Mammary epithelial cell (primary cell): ENCODE measurements at regions of chrX and their contacts with region 1.

Region 1: DNA sequence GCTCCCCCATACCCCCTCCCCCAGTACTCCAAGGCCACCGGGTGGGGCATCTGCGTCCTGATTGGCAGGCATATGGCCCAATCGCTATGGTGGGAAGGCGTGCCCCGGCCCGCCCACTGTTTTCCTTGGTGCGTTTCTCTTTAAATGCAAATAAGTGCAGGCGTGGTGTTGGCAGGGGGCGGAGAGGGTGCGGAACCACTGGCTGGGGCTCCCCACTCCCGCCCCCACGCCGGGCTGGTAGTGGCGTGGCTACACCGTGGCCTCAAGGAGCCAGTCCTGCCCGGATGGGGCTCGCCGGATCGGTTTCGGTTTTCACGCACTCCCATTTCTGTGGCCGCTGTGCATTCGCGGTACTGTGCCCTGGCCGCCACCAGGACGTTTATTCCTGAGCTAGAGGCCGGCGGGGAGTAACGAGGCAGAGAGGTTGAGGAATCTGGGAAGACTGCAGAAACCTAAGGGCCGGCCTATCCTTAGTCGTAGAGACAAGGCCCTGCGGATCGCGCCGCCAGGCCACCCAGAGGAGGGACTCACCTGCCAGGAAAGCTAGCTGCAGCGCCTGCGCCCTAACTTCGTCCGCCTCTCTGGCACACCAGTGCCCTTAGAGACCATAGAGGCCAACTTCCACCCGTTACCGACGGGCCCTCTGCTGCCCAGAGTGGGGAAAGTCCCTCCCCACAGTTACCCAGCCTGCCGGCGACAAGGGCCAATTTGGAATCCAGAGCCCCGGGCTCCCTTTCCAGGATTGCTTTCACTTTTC is 405 bp upstream of the AMER1 start:
- DNase-seq: peak; percentile 88
- H3K4me3 ChIP-seq: peak overlapping the region; percentile 54 to 69 (median 66)
- H3K27ac ChIP-seq: peak overlapping the region; percentile 68
- H3K4me1 ChIP-seq: peaks cover 11% of the 10 kb centered on the region
- H3K27me3 ChIP-seq: no peaks in the 10 kb centered on the region
- CTCF ChIP-seq: peak in 1 of 2 donors; percentile 21

Region 2: DNA sequence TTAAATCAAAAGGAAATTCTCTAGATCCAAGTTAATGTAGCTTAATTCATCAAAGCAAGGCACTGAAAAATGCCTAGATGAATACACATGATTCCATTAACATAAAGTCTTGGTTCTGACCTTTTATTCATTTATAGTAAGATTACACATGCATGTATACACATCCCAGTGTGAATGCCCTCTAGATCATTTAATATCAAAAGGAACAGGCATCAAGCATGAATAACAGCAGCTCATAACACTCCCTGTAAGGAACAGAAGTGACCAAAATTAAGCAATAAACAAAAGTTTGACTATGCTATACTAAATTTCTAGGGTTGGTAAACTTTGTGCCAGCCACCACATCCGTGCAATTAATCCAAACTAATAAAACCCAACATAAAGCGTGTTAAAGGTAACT is 1366.3 kb before region 1 on chrX:
- CTCF ChIA-PET with region 1: no interaction called
- dilution Hi-C with region 1: no loop called
- in situ Hi-C with region 1: no loop called
- intact Hi-C with region 1: no loop called
- DNase-seq: no peak
- H3K4me3 ChIP-seq: no peak overlapping the region
- H3K27ac ChIP-seq: no peak overlapping the region
- H3K4me1 ChIP-seq: no peaks in the 10 kb centered on the region
- H3K27me3 ChIP-seq: no peaks in the 10 kb centered on the region
- CTCF ChIP-seq: no peak

Region 3: GRCh38 chrX:63754860-63755582 is 450.9 kb before region 1 on chrX:
- CTCF ChIA-PET with region 1: no interaction called
- dilution Hi-C with region 1: no loop called
- in situ Hi-C with region 1: no loop called
- intact Hi-C with region 1: loop called (anchors 2 kb)
- DNase-seq: peak; percentile 89
- H3K4me3 ChIP-seq: peak overlapping the region; percentile 66 to 81 (median 78)
- H3K27ac ChIP-seq: peak overlapping the region; percentile 90
- H3K4me1 ChIP-seq: peaks cover 16% of the 10 kb centered on the region
- H3K27me3 ChIP-seq: no peaks in the 10 kb centered on the region
- CTCF ChIP-seq: no peak

Region 4: DNA sequence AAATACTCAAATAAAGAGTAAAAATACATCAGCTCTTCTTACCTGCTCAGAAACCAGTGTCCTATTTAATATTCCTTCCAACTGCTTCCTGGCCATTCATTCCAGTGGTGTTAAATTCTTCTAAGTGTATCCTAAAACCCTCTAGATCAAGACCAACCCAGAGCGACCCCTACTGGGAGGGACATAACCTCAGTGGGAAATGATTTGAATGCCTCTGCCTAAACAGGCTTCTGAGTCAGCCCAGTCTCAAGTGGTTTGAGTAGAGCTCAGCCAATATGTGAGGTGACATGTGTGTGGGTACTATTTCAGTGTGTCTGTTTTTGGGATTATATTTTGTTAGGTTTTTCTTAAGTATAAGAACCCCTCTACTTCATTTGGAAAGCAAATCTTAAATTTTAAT is 287.3 kb before region 1 on chrX:
- CTCF ChIA-PET with region 1: no interaction called
- dilution Hi-C with region 1: no loop called
- in situ Hi-C with region 1: no loop called
- intact Hi-C with region 1: loop called (anchors 10 kb)
- DNase-seq: peak; percentile 28
- H3K4me3 ChIP-seq: no peak overlapping the region
- H3K27ac ChIP-seq: no peak overlapping the region
- H3K4me1 ChIP-seq: peaks cover 7% of the 10 kb centered on the region
- H3K27me3 ChIP-seq: no peaks in the 10 kb centered on the region
- CTCF ChIP-seq: peak; percentile 24 to 50

Region 5: GRCh38 chrX:64093761-64094160 is 112.2 kb before region 1 on chrX:
- CTCF ChIA-PET with region 1: no interaction called
- dilution Hi-C with region 1: no loop called
- in situ Hi-C with region 1: no loop called
- intact Hi-C with region 1: loop called (anchors 2 kb)
- DNase-seq: no peak
- H3K4me3 ChIP-seq: no peak overlapping the region
- H3K27ac ChIP-seq: no peak overlapping the region
- H3K4me1 ChIP-seq: no peaks in the 10 kb centered on the region
- H3K27me3 ChIP-seq: no peaks in the 10 kb centered on the region
- CTCF ChIP-seq: peak; percentile 25 to 43

Region 6: GRCh38 chrX:64152857-64153256 is 53.1 kb before region 1 on chrX:
- CTCF ChIA-PET with region 1: no interaction called
- dilution Hi-C with region 1: no loop called
- in situ Hi-C with region 1: no loop called
- intact Hi-C with region 1: loop called (anchors 5 kb)
- DNase-seq: no peak
- H3K4me3 ChIP-seq: no peak overlapping the region
- H3K27ac ChIP-seq: no peak overlapping the region
- H3K4me1 ChIP-seq: no peaks in the 10 kb centered on the region
- H3K27me3 ChIP-seq: no peaks in the 10 kb centered on the region
- CTCF ChIP-seq: no peak

Region 7: DNA sequence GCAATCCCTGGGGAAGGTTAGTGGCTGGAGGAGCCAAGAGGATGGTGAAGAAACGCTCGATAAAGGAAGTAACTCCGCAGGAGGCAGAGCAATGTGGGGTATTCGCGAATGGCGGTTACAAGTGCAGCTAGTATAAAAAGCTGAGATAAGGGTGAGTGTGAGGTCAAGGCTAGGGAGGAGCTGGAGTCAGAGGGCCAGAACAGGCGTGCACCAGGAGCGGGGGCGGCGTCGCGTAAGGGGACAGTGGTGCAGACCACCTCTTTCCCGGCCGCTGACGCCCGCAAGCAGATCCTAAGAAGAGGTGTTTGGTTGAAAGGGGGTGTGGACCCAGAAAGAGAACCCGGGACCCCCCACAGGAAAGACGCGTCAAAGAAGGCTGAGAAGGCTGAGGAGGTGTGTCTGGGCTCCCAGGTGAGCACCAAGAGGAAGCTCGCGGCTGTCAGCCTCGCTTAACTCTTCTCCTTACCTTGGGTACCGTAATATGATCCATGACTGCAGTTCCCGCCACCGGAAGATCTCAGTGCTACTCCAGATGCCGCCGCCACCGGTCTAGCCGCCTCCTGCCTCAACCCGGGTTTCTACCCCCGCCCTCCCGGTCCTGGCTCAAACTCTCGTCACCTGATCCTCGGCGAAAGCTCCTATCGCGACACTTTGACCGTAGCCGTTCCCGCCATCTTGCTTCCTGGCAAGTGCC is 189.1 kb after region 1 on chrX and contains the start of gene MTMR8:
- CTCF ChIA-PET with region 1: no interaction called
- dilution Hi-C with region 1: no loop called
- in situ Hi-C with region 1: no loop called
- intact Hi-C with region 1: loop called (anchors 10 kb)
- DNase-seq: peak; percentile 62
- H3K4me3 ChIP-seq: peak within 1 kb of the TSS; percentile 49 to 67 (median 67)
- H3K27ac ChIP-seq: no peak within 1 kb of the TSS
- H3K4me1 ChIP-seq: no peaks in the 10 kb centered on the region
- H3K27me3 ChIP-seq: no peaks in the 10 kb centered on the region
- CTCF ChIP-seq: no peak
- total RNA-seq, gene MTMR8: 2.3 to 2.8 TPM